Activated B cell treated with CpG ODN at 0.5 μM for 24 hours (primary cell): ENCODE measurements at regions of chr7 and their contacts with region 1.

Region 1: DNA sequence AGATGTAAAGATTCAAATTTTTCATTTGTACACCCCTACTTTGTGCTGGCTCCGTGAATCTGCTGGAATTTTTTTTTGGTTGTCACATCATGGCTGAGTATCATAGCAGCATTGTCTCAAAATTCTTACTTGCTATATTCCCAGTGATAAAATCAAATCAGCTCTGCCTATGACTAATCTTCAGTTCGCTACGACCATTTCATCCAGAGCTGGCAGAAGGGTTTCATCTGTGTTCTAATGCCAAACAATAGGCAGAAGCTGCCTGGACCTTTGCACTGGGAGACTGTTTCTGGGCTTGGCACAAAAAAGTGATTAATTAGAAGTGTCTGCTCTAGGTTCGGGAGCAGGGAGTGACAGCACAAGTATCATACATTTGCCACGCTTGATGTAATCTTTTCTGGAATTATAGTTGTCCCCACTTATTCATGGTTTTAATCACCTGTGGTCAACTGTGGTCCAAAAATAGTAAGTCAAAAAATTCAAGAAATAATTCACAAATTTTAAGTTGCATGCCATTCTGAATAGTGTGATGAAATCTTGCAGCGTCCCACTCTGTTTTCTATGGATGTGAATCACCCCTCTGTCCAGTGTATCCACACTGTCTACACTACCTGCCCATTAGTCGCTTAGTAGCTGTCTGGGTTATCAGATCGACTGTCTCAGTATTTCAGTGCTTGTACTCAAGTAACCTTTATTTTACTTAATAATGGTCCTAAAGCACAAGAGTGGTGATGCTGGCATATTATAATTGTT is 120.5 kb upstream of the IMMP2L start:
- DNase-seq: no peak
- ATAC-seq: no peak
- H3K4me3 Mint-ChIP-seq: no peak overlapping the region
- H3K27ac Mint-ChIP-seq: no peak overlapping the region
- H3K4me1 Mint-ChIP-seq: no peaks in the 10 kb centered on the region
- H3K27me3 Mint-ChIP-seq: peaks cover 1% of the 10 kb centered on the region
- CTCF ChIP-seq: no peak

Region 2: GRCh38 chr7:111622082-111622481 is 60.7 kb before region 1 on chr7:
- CTCF ChIA-PET with region 1: no interaction called
- POLR2A ChIA-PET with region 1: no interaction called
- intact Hi-C with region 1: loop called (anchors 10 kb)
- DNase-seq: no peak
- ATAC-seq: no peak
- H3K4me3 Mint-ChIP-seq: no peak overlapping the region
- H3K27ac Mint-ChIP-seq: no peak overlapping the region
- H3K4me1 Mint-ChIP-seq: no peaks in the 10 kb centered on the region
- H3K27me3 Mint-ChIP-seq: no peaks in the 10 kb centered on the region
- CTCF ChIP-seq: no peak

Region 3: GRCh38 chr7:111697776-111698175 is 15.0 kb after region 1 on chr7:
- CTCF ChIA-PET with region 1: no interaction called
- POLR2A ChIA-PET with region 1: no interaction called
- intact Hi-C with region 1: no loop called
- DNase-seq: no peak
- ATAC-seq: no peak
- H3K4me3 Mint-ChIP-seq: no peak overlapping the region
- H3K27ac Mint-ChIP-seq: no peak overlapping the region
- H3K4me1 Mint-ChIP-seq: no peaks in the 10 kb centered on the region
- H3K27me3 Mint-ChIP-seq: no peaks in the 10 kb centered on the region
- CTCF ChIP-seq: no peak

Region 4: GRCh38 chr7:112031689-112032088 is 348.9 kb after region 1 on chr7:
- CTCF ChIA-PET with region 1: no interaction called
- POLR2A ChIA-PET with region 1: no interaction called
- intact Hi-C with region 1: no loop called
- DNase-seq: no peak
- ATAC-seq: no peak
- H3K4me3 Mint-ChIP-seq: no peak overlapping the region
- H3K27ac Mint-ChIP-seq: no peak overlapping the region
- H3K4me1 Mint-ChIP-seq: no peaks in the 10 kb centered on the region
- H3K27me3 Mint-ChIP-seq: no peaks in the 10 kb centered on the region
- CTCF ChIP-seq: no peak